CD4-positive, alpha-beta T cell (primary cell): ENCODE measurements at regions of chr15 and their contacts with region 1.

Region 1: GRCh38 chr15:82709421-82710207 is at the start of gene AP3B2:
- DNase-seq: peak; percentile 38 to 84 (median 60)
- ATAC-seq: peak; percentile 92
- H3K4me3 ChIP-seq: peak within 1 kb of the TSS; percentile 54
- H3K4me3 Mint-ChIP-seq: peak within 1 kb of the TSS; percentile 70
- H3K27ac ChIP-seq: no peak within 1 kb of the TSS
- H3K27ac Mint-ChIP-seq: no peak within 1 kb of the TSS
- H3K4me1 ChIP-seq: peaks cover 17% of the 10 kb centered on the region
- H3K4me1 Mint-ChIP-seq: no peaks in the 10 kb centered on the region
- H3K27me3 ChIP-seq: peaks cover 11 to 22% of the 10 kb centered on the region in 2 experiments
- H3K27me3 Mint-ChIP-seq: peaks cover 32% of the 10 kb centered on the region
- CTCF ChIP-seq: no peak
- total RNA-seq, gene AP3B2: 0.25 to 0.98 TPM

Region 2: DNA sequence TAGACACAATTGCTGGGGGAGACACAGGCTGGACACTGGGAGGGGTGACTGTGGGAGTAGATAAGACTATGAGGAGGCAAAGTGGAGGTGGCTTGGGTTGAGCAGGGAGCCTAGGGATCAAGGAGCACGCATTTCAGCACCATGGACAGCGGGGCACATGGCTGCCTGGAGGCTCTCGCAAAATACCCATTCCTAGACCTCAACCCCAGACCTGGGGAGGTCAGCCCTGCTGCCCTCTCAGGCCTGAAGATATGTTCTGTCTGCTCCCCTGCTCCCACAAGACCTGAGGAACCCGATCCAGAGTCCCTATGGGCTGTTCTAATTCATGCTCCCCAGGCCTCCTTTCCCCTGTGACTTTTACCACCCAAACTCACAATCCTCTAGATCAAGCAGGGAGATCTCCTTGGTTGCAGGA is 46.4 kb before region 1 on chr15:
- CTCF ChIA-PET with region 1: no interaction called
- POLR2A ChIA-PET with region 1: no interaction called
- intact Hi-C with region 1: loop called in 1 of 2 experiments (anchors 5 kb)
- DNase-seq: peak in 13 of 14 experiments; percentile 19 to 65 (median 32)
- ATAC-seq: no peak
- H3K4me3 ChIP-seq: no peak overlapping the region
- H3K4me3 Mint-ChIP-seq: no peak overlapping the region
- H3K27ac ChIP-seq: no peak overlapping the region
- H3K27ac Mint-ChIP-seq: no peak overlapping the region
- H3K4me1 ChIP-seq: no peaks in the 10 kb centered on the region
- H3K4me1 Mint-ChIP-seq: no peaks in the 10 kb centered on the region
- H3K27me3 ChIP-seq: peaks cover 0 to 9% of the 10 kb centered on the region in 2 experiments
- H3K27me3 Mint-ChIP-seq: peaks cover 41% of the 10 kb centered on the region
- CTCF ChIP-seq: no peak

Region 3: DNA sequence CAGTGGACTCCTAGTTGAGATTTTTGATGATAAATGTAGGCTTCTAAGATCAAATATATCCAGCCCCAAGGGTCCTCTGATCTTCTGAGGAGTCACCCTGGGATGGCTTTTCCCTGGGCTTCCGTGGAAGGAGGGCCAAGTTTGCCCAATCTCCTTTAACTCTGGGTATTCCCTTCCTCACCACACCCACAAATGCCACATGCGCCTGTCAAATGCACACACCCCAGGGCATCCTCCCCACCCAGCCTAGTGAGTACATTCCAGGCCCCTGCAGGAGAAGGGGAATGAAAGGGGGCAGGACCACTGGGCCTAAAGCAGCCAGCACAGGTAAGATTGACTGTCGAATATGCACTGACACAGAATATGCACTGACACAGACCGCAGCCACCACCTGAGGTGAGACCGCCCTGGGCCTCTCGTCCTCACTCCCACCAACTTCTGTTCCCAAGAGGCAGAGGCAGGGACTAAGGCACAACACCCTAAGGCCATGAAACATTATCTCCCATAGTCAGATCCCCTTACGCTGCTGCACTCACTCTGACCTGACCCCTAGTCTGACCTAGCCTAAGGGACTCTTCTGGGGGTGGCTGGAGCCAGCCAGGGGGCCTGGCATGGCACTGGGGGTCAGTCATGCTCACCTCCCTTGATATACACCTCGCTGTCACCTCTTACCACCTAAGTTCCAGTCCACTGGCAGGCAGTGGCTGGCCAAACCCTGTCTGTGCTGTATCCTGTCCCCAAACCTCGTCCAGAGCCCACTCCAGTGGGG is 10.9 kb before region 1 on chr15:
- CTCF ChIA-PET with region 1: no interaction called
- POLR2A ChIA-PET with region 1: no interaction called
- intact Hi-C with region 1: no loop called
- DNase-seq: no peak
- ATAC-seq: no peak
- H3K4me3 ChIP-seq: no peak overlapping the region
- H3K4me3 Mint-ChIP-seq: no peak overlapping the region
- H3K27ac ChIP-seq: no peak overlapping the region
- H3K27ac Mint-ChIP-seq: no peak overlapping the region
- H3K4me1 ChIP-seq: no peaks in the 10 kb centered on the region
- H3K4me1 Mint-ChIP-seq: no peaks in the 10 kb centered on the region
- H3K27me3 ChIP-seq: no peaks in the 10 kb centered on the region
- H3K27me3 Mint-ChIP-seq: peaks cover 18% of the 10 kb centered on the region
- CTCF ChIP-seq: no peak